Activated B cell treated with CpG ODN at 0.5 μM for 24 hours (primary cell): ENCODE measurements at regions of chr2 and their contacts with region 1.

Region 1: GRCh38 chr2:70142590-70143313 is 48.1 kb downstream of the C2orf42 start:
- DNase-seq: peak; percentile 100
- ATAC-seq: peak; percentile 70
- H3K4me3 Mint-ChIP-seq: peak overlapping the region; percentile 86
- H3K27ac Mint-ChIP-seq: peak overlapping the region; percentile 100
- H3K4me1 Mint-ChIP-seq: peaks cover 37% of the 10 kb centered on the region
- H3K27me3 Mint-ChIP-seq: no peaks in the 10 kb centered on the region
- CTCF ChIP-seq: no peak

Region 2: GRCh38 chr2:69734035-69734631 is 408.6 kb before region 1 on chr2:
- CTCF ChIA-PET with region 1: no interaction called
- POLR2A ChIA-PET with region 1: no interaction called
- intact Hi-C with region 1: loop called (anchors 5 kb)
- DNase-seq: no peak
- ATAC-seq: no peak
- H3K4me3 Mint-ChIP-seq: no peak overlapping the region
- H3K27ac Mint-ChIP-seq: no peak overlapping the region
- H3K4me1 Mint-ChIP-seq: peaks cover 55% of the 10 kb centered on the region
- H3K27me3 Mint-ChIP-seq: no peaks in the 10 kb centered on the region
- CTCF ChIP-seq: no peak

Region 3: GRCh38 chr2:69902213-69902922 is 240.4 kb before region 1 on chr2:
- CTCF ChIA-PET with region 1: no interaction called
- POLR2A ChIA-PET with region 1: interaction called, 12 read pairs
- intact Hi-C with region 1: no loop called
- DNase-seq: no peak
- ATAC-seq: peak; percentile 79
- H3K4me3 Mint-ChIP-seq: peak overlapping the region; percentile 76
- H3K27ac Mint-ChIP-seq: peak overlapping the region; percentile 92
- H3K4me1 Mint-ChIP-seq: peaks cover 41% of the 10 kb centered on the region
- H3K27me3 Mint-ChIP-seq: no peaks in the 10 kb centered on the region
- CTCF ChIP-seq: no peak

Region 4: DNA sequence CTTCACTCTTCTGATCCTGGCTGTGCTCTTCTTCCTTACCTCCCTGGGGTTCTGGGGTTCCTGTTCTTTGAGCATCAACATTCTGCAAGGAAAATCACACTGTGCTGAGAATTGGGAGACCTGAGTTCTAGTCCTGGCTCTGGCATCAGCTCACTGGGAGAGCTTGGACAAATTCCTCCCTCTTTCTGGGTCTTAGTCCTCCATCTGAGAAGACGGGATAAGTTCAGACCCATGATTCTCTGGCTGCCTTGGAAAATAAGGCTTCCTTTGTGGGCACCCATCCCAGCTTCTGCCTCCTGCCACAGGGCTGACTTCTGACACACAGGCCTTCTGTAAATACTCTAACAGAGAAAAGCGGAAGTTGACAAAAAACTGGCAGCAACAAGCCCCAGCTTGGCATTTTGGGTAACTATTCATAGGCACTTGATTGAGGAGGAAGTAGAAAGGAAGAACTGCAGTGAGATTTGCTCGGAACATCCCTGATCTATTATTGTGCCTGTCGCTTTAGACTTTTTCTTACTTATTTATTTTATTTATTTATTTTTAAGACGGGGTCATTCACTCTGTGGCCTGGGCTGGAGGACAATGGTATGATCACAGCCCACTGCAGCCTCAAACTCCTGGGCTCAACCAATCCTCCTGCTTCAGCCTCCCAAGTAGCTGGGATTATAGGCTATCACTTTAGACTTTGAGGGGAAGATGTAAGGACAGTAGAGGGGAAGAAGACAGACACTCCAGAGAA is 47.6 kb before region 1 on chr2:
- CTCF ChIA-PET with region 1: interaction called, 4 read pairs
- POLR2A ChIA-PET with region 1: interaction called, 976 read pairs
- intact Hi-C with region 1: loop called (anchors 2 kb)
- DNase-seq: peak; percentile 36
- ATAC-seq: peak; percentile 95
- H3K4me3 Mint-ChIP-seq: peak overlapping the region; percentile 84
- H3K27ac Mint-ChIP-seq: peak overlapping the region; percentile 97
- H3K4me1 Mint-ChIP-seq: peaks cover 54% of the 10 kb centered on the region
- H3K27me3 Mint-ChIP-seq: no peaks in the 10 kb centered on the region
- CTCF ChIP-seq: no peak

Region 5: GRCh38 chr2:70124983-70125480 is 17.7 kb before region 1 on chr2:
- CTCF ChIA-PET with region 1: interaction called, 5 read pairs
- POLR2A ChIA-PET with region 1: interaction called, 358 read pairs
- intact Hi-C with region 1: loop called (anchors 1 kb)
- DNase-seq: peak; percentile 76
- ATAC-seq: peak; percentile 66
- H3K4me3 Mint-ChIP-seq: peak overlapping the region; percentile 93
- H3K27ac Mint-ChIP-seq: peak overlapping the region; percentile 100
- H3K4me1 Mint-ChIP-seq: peaks cover 81% of the 10 kb centered on the region
- H3K27me3 Mint-ChIP-seq: no peaks in the 10 kb centered on the region
- CTCF ChIP-seq: no peak

Region 6: DNA sequence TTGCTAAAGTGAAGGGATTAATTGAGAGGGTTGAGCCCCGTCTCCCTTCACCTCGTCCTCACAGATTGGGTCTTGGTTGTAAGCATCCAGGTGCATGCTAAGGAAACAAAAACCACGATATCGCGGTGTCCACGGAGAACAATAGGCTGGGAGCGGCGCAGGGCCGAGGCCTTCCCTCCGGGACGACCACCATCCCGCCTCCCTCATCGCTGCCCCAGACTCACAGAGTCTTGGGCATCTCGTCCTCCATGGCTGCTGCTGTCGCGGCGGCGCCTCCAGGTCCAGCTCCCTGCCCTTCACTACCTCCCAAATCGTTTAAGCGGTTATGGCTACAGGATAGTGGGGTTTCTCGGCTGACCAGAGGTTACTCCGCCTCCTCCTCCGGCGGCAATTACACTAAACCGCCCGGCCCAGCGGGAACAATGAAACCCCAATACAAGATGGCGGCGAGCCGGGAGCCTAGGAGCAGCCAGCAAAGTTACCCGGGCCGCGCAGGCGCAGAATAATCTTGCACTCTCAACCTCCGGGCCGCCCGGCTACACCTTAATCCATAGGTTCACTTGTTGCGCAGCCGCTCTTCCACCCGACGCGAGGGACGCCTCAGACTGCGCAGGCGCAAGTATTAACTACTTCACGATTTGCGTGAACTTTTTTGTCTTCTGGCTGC is 105.6 kb after region 1 on chr2 and contains the start of gene TIA1:
- CTCF ChIA-PET with region 1: no interaction called
- POLR2A ChIA-PET with region 1: interaction called, 6 read pairs
- intact Hi-C with region 1: loop called (anchors 1 kb)
- DNase-seq: peak; percentile 93
- ATAC-seq: peak; percentile 96
- H3K4me3 Mint-ChIP-seq: peak within 1 kb of the TSS; percentile 99
- H3K27ac Mint-ChIP-seq: peak within 1 kb of the TSS; percentile 99
- H3K4me1 Mint-ChIP-seq: peaks cover 44% of the 10 kb centered on the region
- H3K27me3 Mint-ChIP-seq: peaks cover 4% of the 10 kb centered on the region
- CTCF ChIP-seq: no peak
- total RNA-seq, gene TIA1: 129 and 149 TPM in 2 replicates

Region 7: DNA sequence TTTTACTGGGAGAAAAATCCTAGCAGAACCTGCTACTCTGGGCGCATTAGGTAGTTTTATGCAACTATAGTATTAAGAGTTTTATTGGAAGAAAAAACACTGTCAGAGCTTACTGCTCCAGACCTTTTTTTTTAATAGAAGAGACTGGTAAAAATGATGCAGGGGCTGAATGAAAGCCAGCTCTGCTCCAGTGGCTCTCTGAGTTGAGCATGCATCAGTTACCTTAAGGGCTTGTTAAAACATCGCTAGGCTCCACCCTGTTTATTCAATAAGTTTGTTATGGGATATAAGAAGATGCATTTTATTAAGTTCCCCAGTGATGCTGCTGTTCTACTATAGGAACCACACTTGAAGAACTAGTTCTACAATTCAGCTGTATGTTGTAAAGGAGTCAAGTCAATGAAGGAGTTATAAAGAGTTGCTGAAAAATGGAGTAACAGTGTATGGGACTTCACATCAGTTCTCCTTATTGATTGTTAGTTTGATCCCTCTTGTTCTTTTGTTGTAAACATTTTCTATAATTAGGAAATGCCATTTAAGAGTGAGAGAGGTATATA is 137.6 kb after region 1 on chr2:
- CTCF ChIA-PET with region 1: no interaction called
- POLR2A ChIA-PET with region 1: no interaction called
- intact Hi-C with region 1: no loop called
- DNase-seq: no peak
- ATAC-seq: no peak
- H3K4me3 Mint-ChIP-seq: no peak overlapping the region
- H3K27ac Mint-ChIP-seq: no peak overlapping the region
- H3K4me1 Mint-ChIP-seq: peaks cover 5% of the 10 kb centered on the region
- H3K27me3 Mint-ChIP-seq: no peaks in the 10 kb centered on the region
- CTCF ChIP-seq: no peak

Region 8: GRCh38 chr2:70431716-70432347 is 289.1 kb after region 1 on chr2:
- CTCF ChIA-PET with region 1: no interaction called
- POLR2A ChIA-PET with region 1: no interaction called
- intact Hi-C with region 1: no loop called
- DNase-seq: no peak
- ATAC-seq: no peak
- H3K4me3 Mint-ChIP-seq: no peak overlapping the region
- H3K27ac Mint-ChIP-seq: no peak overlapping the region
- H3K4me1 Mint-ChIP-seq: no peaks in the 10 kb centered on the region
- H3K27me3 Mint-ChIP-seq: peaks cover 3% of the 10 kb centered on the region
- CTCF ChIP-seq: no peak

Region 9: DNA sequence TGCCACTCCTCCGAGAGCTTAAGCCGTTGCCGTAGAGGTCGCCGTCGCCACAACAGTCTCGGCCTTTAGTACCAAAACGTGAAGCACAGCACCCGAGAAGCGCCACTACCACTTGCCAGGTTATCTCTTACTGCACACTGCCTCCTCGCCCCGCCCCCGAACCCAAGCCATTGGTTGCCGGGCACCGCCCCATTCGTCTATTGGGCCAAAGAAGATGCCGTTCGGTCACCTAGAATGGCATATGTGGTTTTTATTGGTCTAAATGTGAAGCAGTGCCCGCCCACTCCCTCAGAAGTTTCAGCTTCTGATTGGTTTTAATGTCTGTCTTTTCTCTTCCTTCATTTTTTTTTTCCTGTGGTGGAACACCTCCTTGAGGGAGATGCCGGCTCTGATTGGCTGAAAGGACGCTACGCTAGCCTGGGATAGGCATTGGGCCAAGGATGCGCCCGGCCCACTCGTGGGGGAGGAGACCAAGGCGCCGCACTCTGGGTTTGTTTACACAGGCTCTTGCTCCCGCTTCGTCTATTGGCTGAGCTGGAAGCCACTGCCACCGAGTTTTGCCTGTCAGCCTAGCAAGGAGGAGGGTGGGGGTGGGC is 1084.3 kb after region 1 on chr2 and contains the start of gene PAIP2B:
- CTCF ChIA-PET with region 1: no interaction called
- POLR2A ChIA-PET with region 1: no interaction called
- intact Hi-C with region 1: no loop called
- DNase-seq: peak; percentile 89
- ATAC-seq: peak; percentile 92
- H3K4me3 Mint-ChIP-seq: peak within 1 kb of the TSS; percentile 99
- H3K27ac Mint-ChIP-seq: peak within 1 kb of the TSS; percentile 95
- H3K4me1 Mint-ChIP-seq: peaks cover 28% of the 10 kb centered on the region
- H3K27me3 Mint-ChIP-seq: peaks cover 9% of the 10 kb centered on the region
- CTCF ChIP-seq: no peak
- total RNA-seq, gene PAIP2B: 3.7 and 4.0 TPM in 2 replicates

Region 10: GRCh38 chr2:71566372-71566771 is 1423.6 kb after region 1 on chr2:
- CTCF ChIA-PET with region 1: no interaction called
- POLR2A ChIA-PET with region 1: no interaction called
- intact Hi-C with region 1: no loop called
- DNase-seq: no peak
- ATAC-seq: no peak
- H3K4me3 Mint-ChIP-seq: no peak overlapping the region
- H3K27ac Mint-ChIP-seq: no peak overlapping the region
- H3K4me1 Mint-ChIP-seq: no peaks in the 10 kb centered on the region
- H3K27me3 Mint-ChIP-seq: no peaks in the 10 kb centered on the region
- CTCF ChIP-seq: no peak